Endothelial cell of umbilical vein (primary cell): ENCODE measurements at regions of chr11 and their contacts with region 1.

Region 1: DNA sequence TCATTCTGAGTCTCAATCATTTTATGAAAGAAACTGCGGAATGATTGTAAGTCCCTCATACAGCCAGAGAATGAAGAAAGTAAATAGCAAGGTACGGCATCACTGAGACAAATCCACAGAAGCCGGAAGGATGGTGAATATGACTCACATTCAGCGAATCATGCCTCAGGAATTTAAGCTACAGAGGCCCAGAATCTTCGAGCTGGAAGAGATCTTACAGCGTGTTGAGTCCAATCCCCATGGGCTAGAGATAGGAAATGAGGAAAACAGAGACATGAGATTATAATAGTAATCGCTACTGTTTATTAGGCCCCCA is 173.2 kb downstream of the KIF18A start:
- DNase-seq: peak; percentile 62
- H3K4me3 ChIP-seq: no peak overlapping the region
- H3K27ac ChIP-seq: peak overlapping the region; percentile 78
- H3K4me1 ChIP-seq: peaks cover 18% of the 10 kb centered on the region
- H3K27me3 ChIP-seq: no peaks in the 10 kb centered on the region
- CTCF ChIP-seq: no peak
- POLR2A ChIP-seq: no peak

Region 2: DNA sequence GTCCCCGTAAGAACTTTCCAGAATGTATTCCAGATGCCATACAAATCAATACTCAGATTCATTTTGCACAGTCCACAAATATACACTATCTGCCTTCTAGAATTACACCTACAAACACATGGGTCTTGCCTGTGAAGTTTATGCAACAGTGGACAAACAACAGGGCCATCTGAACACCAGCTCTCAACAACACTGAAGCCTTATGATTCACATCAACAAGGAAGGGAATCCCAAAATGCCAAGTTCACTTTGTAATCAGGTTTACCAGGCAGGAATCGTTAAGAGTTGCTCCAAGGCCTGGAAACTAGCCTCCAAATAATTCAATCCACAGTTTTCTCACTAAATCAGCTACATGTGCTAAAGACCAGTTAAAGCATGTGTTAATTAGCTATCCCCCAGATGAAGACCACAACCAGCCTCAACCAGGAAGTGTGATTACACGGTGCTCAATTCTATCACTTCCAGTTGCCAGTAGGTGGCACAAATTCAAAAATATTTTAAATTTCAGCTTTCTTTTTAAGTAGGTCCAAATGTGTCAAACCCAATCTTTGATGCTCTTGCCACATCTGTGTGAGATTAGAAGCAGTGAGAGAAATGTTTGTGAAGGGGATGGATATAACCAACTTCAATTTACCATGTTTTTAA is 95.4 kb before region 1 on chr11:
- CTCF ChIA-PET with region 1: interaction called, 12 read pairs
- POLR2A ChIA-PET with region 1: no interaction called
- dilution Hi-C with region 1: no loop called
- intact Hi-C with region 1: no loop called
- DNase-seq: peak; percentile 29
- H3K4me3 ChIP-seq: no peak overlapping the region
- H3K27ac ChIP-seq: no peak overlapping the region
- H3K4me1 ChIP-seq: no peaks in the 10 kb centered on the region
- H3K27me3 ChIP-seq: peaks cover 5 to 16% of the 10 kb centered on the region in 2 experiments
- CTCF ChIP-seq: peak; percentile 13 to 26
- POLR2A ChIP-seq: no peak

Region 3: GRCh38 chr11:27894552-27894951 is 40.2 kb before region 1 on chr11:
- CTCF ChIA-PET with region 1: no interaction called
- POLR2A ChIA-PET with region 1: no interaction called
- dilution Hi-C with region 1: no loop called
- intact Hi-C with region 1: no loop called
- DNase-seq: no peak
- H3K4me3 ChIP-seq: no peak overlapping the region
- H3K27ac ChIP-seq: no peak overlapping the region
- H3K4me1 ChIP-seq: no peaks in the 10 kb centered on the region
- H3K27me3 ChIP-seq: peaks cover 0 to 6% of the 10 kb centered on the region in 2 experiments
- CTCF ChIP-seq: no peak
- POLR2A ChIP-seq: no peak

Region 4: DNA sequence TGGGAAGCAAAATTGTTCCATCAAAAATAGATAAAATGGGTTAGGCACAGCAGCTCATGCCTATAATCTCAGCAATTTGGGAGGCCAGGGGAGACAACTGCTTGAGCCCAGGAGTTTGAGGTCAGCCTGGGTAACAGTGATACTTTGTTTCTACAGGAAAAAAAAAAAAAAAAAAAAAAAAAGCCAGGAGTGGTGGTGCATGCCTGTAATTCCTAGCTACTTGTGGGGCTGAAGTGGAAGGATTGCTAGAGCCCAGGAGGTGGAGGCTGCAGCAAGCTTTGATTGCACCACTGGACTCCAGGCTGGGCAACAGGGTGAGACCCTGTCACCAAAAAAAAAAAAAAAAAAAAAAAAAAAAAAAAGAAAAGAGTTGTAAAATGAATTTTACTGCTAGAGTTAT is 123.5 kb after region 1 on chr11:
- CTCF ChIA-PET with region 1: no interaction called
- POLR2A ChIA-PET with region 1: interaction called, 11 read pairs
- dilution Hi-C with region 1: no loop called
- intact Hi-C with region 1: no loop called
- DNase-seq: no peak
- H3K4me3 ChIP-seq: no peak overlapping the region
- H3K27ac ChIP-seq: no peak overlapping the region
- H3K4me1 ChIP-seq: no peaks in the 10 kb centered on the region
- H3K27me3 ChIP-seq: no peaks in the 10 kb centered on the region
- CTCF ChIP-seq: no peak
- POLR2A ChIP-seq: no peak

Region 5: GRCh38 chr11:28566339-28567089 is 631.7 kb after region 1 on chr11:
- CTCF ChIA-PET with region 1: no interaction called
- POLR2A ChIA-PET with region 1: no interaction called
- dilution Hi-C with region 1: no loop called
- intact Hi-C with region 1: loop called (anchors 2 kb)
- DNase-seq: peak; percentile 92
- H3K4me3 ChIP-seq: peak overlapping the region in 2 of 3 experiments; percentile 28 to 71
- H3K27ac ChIP-seq: peak overlapping the region; percentile 77
- H3K4me1 ChIP-seq: peaks cover 12% of the 10 kb centered on the region
- H3K27me3 ChIP-seq: no peaks in the 10 kb centered on the region
- CTCF ChIP-seq: no peak
- POLR2A ChIP-seq: no peak